ENCODE measurements at regions of chr9 and their contacts with region 1.

Region 1: GRCh38 chr9:27247756-27248155 is 49.2 kb downstream of the EQTN start:
- DNase-seq: peak; percentile 63
- H3K4me3 Mint-ChIP-seq: no peak overlapping the region
- H3K27ac Mint-ChIP-seq: peak overlapping the region; percentile 24
- H3K4me1 Mint-ChIP-seq: peaks cover 17% of the 10 kb centered on the region
- H3K27me3 Mint-ChIP-seq: no peaks in the 10 kb centered on the region
- CTCF ChIP-seq: peak; percentile 55

Region 2: GRCh38 chr9:27303219-27303618 is 55.5 kb after region 1 on chr9:
- CTCF ChIA-PET with region 1: no interaction called
- intact Hi-C with region 1: no loop called
- DNase-seq: peak; percentile 32
- H3K4me3 Mint-ChIP-seq: no peak overlapping the region
- H3K27ac Mint-ChIP-seq: no peak overlapping the region
- H3K4me1 Mint-ChIP-seq: no peaks in the 10 kb centered on the region
- H3K27me3 Mint-ChIP-seq: peaks cover 21% of the 10 kb centered on the region
- CTCF ChIP-seq: no peak

Region 3: GRCh38 chr9:27548055-27548741 is 300.4 kb after region 1 on chr9:
- CTCF ChIA-PET with region 1: no interaction called
- intact Hi-C with region 1: loop called (anchors 5 kb)
- DNase-seq: no peak
- H3K4me3 Mint-ChIP-seq: no peak overlapping the region
- H3K27ac Mint-ChIP-seq: no peak overlapping the region
- H3K4me1 Mint-ChIP-seq: no peaks in the 10 kb centered on the region
- H3K27me3 Mint-ChIP-seq: no peaks in the 10 kb centered on the region
- CTCF ChIP-seq: no peak

Measured in Calu3 (cell line).